ENCODE measurements at regions of chr1 and their contacts with region 1.

Region 1: DNA sequence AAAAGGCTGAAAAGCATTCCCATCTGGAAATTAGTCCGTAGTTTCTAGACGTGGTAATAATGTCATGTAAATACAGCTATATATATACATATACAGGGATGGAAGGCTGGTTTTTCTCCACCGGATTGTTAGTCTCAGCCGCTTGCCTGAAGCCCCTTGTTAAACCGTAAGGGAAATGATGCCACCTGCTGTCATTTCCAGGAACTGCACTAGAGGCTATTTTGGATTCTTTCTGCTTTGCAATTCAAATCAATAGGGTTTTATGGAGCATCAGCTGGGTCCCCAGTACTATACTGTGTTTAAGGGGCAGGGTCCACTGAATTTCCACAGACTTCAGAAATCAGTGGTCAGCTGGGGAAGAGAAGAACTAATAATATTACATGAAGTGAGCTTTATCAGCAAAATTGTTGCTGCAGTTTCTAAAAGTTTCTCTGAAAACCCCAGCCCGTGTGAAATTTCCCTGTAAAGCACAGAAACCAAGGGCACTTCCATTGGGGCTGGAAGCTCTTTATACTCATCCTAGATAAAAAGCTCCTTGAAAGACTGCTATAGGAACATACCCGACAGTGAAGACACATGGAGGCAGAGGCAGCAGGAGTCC is 33.8 kb upstream of the MPZL1 start:
- DNase-seq: peak; percentile 90
- ATAC-seq: peak; percentile 84
- H3K4me3 Mint-ChIP-seq: no peak overlapping the region
- H3K27ac Mint-ChIP-seq: peak overlapping the region; percentile 74
- H3K4me1 Mint-ChIP-seq: peaks cover 22% of the 10 kb centered on the region
- H3K27me3 Mint-ChIP-seq: no peaks in the 10 kb centered on the region
- CTCF ChIP-seq: peak; percentile 94

Region 2: GRCh38 chr1:167542109-167543032 is 145.6 kb before region 1 on chr1:
- CTCF ChIA-PET with region 1: interaction called, 13 read pairs
- POLR2A ChIA-PET with region 1: no interaction called
- intact Hi-C with region 1: no loop called
- DNase-seq: no peak
- ATAC-seq: peak; percentile 32
- H3K4me3 Mint-ChIP-seq: no peak overlapping the region
- H3K27ac Mint-ChIP-seq: peak overlapping the region; percentile 2
- H3K4me1 Mint-ChIP-seq: peaks cover 28% of the 10 kb centered on the region
- H3K27me3 Mint-ChIP-seq: no peaks in the 10 kb centered on the region
- CTCF ChIP-seq: no peak

Region 3: DNA sequence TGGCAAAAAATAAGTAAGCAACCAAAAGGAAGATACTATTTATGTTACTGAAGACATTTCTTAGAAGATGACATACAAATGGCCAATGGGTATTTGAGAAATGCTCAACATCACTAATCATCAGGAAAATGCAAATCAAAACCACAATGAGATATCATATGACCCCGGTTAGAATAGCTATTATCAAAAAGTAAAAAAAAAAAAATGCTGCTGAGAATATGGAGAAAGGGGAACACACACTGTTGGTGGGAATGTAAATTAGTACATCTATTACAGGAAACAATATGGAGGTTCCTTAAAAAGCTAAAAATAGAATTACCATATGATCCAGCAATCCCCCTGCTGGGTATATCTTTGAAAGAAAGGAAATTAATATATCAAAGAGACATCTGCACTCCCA is 100.1 kb before region 1 on chr1:
- CTCF ChIA-PET with region 1: interaction called, 28 read pairs
- POLR2A ChIA-PET with region 1: interaction called, 3 read pairs
- intact Hi-C with region 1: no loop called
- DNase-seq: no peak
- ATAC-seq: no peak
- H3K4me3 Mint-ChIP-seq: no peak overlapping the region
- H3K27ac Mint-ChIP-seq: no peak overlapping the region
- H3K4me1 Mint-ChIP-seq: no peaks in the 10 kb centered on the region
- H3K27me3 Mint-ChIP-seq: no peaks in the 10 kb centered on the region
- CTCF ChIP-seq: no peak

Region 4: DNA sequence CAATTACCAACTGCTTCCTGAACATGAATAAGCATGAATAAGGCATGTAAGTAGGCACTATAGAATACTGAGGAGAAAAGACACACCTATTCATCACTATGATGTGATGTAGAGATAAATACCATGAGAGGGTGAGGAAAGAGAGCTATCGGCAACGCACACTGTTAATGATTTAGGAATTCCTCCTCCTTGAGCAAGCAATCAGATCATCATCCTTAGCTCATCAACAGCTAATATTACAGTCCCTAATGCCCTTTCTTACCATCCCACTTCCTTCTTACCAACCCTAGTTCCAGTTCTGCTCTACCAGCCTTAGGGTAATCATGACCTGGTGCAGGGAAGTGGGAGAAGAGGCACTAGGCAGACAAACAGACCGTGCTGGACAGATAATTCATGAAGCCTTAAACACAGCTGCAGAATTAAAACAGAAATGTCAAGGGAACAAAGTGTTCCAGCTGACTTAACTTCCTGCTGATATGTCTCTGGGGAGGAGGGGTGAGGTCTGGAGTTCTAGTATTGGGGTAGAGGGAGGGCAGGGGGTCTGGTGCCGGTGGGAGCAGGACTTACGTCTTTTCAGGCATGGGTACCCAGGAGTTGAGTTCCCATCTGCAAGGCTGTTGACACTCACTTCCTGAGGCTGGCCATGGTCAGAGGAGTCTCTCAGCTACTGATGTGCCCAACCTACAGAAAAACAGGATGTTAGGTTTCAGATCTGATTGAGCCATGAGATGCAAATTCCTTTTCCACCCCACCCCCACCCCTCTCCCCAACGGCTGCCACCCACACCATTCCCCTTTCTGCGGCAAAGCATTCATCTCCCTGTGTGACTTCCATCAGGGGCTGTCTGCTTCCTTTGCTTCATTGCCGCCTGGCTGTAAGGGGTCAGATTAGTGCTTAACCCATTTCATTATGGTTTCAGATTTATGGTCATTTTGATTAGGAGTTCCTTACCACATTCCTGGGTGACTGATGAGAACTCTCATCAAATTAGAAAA is 70.6 kb before region 1 on chr1:
- CTCF ChIA-PET with region 1: interaction called, 13 read pairs
- POLR2A ChIA-PET with region 1: interaction called, 3 read pairs
- intact Hi-C with region 1: no loop called
- DNase-seq: peak; percentile 35
- ATAC-seq: peak; percentile 68
- H3K4me3 Mint-ChIP-seq: peak overlapping the region; percentile 48
- H3K27ac Mint-ChIP-seq: peak overlapping the region; percentile 86
- H3K4me1 Mint-ChIP-seq: peaks cover 44% of the 10 kb centered on the region
- H3K27me3 Mint-ChIP-seq: no peaks in the 10 kb centered on the region
- CTCF ChIP-seq: no peak

Region 5: GRCh38 chr1:167641786-167642500 is 46.1 kb before region 1 on chr1:
- CTCF ChIA-PET with region 1: interaction called, 27 read pairs
- POLR2A ChIA-PET with region 1: interaction called, 3 read pairs
- intact Hi-C with region 1: no loop called
- DNase-seq: peak; percentile 42
- ATAC-seq: peak; percentile 18
- H3K4me3 Mint-ChIP-seq: peak overlapping the region; percentile 1
- H3K27ac Mint-ChIP-seq: peak overlapping the region; percentile 65
- H3K4me1 Mint-ChIP-seq: peaks cover 87% of the 10 kb centered on the region
- H3K27me3 Mint-ChIP-seq: no peaks in the 10 kb centered on the region
- CTCF ChIP-seq: no peak

Region 6: DNA sequence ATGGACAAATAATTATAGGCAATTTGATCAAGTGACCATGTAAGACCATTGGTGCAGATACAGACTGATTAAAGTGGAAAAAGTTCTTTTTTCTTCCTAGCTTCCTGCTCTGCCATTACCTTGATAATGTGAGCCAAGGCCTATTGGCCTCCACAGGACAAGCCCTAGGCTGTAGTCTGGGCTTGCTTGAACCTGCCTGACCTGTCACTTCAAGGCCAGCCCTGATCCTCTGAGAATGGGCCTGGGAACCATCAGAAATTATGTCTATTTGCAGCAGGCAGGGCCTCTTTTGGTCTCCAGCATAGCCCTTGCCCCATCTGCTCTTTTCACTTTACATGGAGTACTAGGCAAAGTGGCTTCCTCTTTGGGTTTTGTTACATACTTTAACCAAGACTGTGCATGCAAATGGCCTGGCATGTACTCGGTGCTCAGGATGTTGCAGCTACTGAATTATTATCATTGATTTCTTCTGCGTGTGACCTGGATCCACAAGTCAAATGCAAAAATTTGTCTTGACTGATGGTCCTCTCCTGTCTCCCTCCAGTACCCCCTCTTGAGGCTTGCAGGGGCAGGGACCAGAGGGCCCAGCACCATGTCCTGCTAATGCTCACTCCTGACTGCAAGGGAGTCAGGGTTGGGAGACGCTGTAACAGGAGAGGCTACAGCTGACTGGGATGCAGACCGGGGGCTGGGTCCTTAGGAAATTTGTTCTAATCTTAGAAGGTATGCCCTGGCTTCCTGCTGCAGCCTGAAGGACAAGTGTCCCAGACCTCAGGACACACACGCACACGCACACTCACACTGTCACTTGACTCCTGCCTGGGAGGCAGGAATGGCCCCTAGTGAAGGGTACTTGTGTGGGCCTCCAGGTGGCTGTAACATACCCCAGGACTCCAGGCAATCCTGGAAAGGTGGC is 18.6 kb before region 1 on chr1:
- CTCF ChIA-PET with region 1: interaction called, 35 read pairs
- POLR2A ChIA-PET with region 1: interaction called, 3 read pairs
- intact Hi-C with region 1: no loop called
- DNase-seq: no peak
- ATAC-seq: no peak
- H3K4me3 Mint-ChIP-seq: no peak overlapping the region
- H3K27ac Mint-ChIP-seq: peak overlapping the region; percentile 35
- H3K4me1 Mint-ChIP-seq: peaks cover 87% of the 10 kb centered on the region
- H3K27me3 Mint-ChIP-seq: no peaks in the 10 kb centered on the region
- CTCF ChIP-seq: no peak

Measured in activated CD8-positive, alpha-beta T cell treated with anti-CD3 and anti-CD28 coated beads for 36 hours (primary cell).